ENCODE measurements at regions of chr2 and their contacts with region 1.

Region 1: DNA sequence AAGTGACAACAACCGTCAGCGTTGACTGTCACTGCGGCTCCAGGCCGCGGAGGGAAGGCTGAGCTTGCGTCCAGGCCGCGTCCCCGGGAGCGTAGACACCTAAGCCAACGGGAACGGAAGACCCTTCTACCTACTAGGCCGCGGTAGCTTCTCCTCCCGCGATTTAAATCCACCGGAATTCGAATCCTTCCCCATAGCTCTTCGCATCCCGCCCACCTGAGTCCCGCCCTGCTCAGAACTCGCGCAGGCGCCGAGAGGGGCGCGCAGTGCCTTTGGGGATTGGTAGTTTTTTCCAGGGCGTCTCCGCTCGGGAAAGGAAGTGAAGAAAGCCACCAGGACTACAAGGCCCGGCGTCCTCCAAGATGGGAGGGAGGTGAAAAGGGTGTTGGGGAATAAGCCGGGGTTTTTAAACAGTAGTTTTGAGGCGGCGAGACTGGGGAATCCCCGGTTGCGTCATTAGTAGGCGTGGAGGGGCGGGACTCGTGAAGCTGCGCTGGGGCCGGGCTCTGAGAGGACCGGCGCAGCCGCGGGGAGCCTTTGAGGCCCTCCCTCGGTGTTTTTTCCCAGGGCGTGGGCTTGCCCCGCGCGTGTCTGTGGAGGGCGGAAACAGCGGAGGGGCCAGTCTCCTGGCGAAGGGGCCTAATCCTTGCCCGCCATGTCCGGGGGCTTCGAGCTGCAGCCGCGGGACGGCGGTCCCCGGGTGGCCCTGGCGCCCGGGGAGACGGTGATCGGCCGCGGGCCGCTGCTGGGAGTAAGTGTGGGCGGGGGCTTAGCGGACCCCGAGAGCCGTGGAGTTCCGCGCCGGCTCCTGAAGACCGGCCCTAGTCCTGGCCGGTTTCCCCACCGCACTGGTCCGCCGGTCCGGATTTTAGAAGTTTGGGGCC is at the starts of genes APLF and FBXO48:
- DNase-seq: peak; percentile 98
- H3K4me3 Mint-ChIP-seq: peak within 1 kb of the TSS; percentile 96
- H3K27ac Mint-ChIP-seq: peak within 1 kb of the TSS; percentile 95
- H3K4me1 Mint-ChIP-seq: peaks cover 47% of the 10 kb centered on the region
- H3K27me3 Mint-ChIP-seq: no peaks in the 10 kb centered on the region
- total RNA-seq, gene APLF: 2.8 to 3.6 TPM
- total RNA-seq, gene FBXO48: 5.0 to 5.4 TPM

Region 2: DNA sequence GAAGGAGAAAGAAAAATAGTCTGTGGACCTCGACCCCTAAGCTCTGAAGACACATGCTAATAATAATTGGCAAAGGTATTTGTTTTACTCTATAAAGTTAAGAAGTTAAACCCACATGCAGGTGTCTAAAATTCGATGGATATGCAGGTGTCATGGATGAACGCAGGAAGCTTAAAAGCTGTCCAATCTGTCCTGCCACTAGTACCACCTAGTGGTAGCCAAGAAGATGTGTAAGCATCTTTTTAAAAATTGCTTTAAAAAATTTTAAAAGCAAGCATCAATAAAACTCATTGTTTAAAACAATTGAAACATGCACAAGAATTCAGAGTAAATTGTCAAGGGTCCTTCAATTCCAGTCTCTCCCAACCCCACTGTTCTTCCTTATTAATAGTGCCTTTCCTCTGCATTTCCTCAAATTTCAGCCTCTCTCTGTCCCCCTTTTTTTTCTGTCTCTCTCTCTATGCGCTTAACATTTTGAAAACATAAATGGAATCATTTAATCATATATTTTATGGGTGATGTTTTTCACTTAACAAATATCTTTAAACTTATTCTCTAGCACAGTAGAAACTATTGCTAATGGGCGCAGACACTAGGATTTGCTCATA is 184.4 kb before region 1 on chr2:
- CTCF ChIA-PET with region 1: no interaction called
- POLR2A ChIA-PET with region 1: no interaction called
- DNase-seq: peak; percentile 17
- H3K4me3 Mint-ChIP-seq: no peak overlapping the region
- H3K27ac Mint-ChIP-seq: no peak overlapping the region
- H3K4me1 Mint-ChIP-seq: no peaks in the 10 kb centered on the region
- H3K27me3 Mint-ChIP-seq: peaks cover 21% of the 10 kb centered on the region

Region 3: DNA sequence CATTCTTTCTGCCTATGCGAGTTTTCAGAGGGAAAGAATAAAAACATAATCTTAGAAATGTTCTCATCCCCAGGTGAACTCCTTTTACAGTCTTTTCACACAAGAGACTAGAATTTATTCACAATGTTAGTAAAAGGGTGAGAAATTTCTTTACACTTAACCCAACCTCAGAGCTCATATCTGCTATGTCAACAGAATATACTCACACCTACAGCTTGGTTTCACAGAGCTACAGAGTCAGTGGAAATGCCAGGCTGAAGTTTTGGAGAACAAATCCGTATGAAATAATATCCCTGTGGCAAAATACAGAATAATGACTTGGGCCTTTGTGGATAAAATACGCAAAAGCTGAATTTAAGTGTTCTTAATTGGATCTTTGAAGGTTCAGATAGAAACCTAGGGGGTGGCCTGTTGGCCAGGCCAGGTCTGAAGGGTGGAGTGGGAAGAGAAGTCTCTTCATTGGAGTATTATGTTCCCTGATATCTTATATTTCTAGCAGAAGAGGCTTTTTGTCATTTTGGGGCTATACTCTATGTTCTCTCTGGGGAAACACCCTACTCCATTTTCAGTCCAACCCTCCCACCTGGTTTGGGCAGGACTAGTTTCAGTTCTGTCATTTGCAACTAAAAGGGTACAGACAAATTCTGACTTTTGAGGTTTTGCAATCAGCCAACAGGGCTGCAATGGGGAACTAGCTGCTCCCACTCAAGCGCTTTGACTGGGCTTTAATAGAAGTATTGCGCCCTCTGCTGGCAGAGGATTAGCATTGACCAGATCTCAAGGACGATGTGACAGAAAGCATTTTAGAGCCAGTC is 25.9 kb before region 1 on chr2:
- CTCF ChIA-PET with region 1: interaction called, 13 read pairs
- POLR2A ChIA-PET with region 1: interaction called, 6 read pairs
- DNase-seq: peak; percentile 84
- H3K4me3 Mint-ChIP-seq: no peak overlapping the region
- H3K27ac Mint-ChIP-seq: peak overlapping the region; percentile 7
- H3K4me1 Mint-ChIP-seq: peaks cover 16% of the 10 kb centered on the region
- H3K27me3 Mint-ChIP-seq: peaks cover 10% of the 10 kb centered on the region

Region 4: DNA sequence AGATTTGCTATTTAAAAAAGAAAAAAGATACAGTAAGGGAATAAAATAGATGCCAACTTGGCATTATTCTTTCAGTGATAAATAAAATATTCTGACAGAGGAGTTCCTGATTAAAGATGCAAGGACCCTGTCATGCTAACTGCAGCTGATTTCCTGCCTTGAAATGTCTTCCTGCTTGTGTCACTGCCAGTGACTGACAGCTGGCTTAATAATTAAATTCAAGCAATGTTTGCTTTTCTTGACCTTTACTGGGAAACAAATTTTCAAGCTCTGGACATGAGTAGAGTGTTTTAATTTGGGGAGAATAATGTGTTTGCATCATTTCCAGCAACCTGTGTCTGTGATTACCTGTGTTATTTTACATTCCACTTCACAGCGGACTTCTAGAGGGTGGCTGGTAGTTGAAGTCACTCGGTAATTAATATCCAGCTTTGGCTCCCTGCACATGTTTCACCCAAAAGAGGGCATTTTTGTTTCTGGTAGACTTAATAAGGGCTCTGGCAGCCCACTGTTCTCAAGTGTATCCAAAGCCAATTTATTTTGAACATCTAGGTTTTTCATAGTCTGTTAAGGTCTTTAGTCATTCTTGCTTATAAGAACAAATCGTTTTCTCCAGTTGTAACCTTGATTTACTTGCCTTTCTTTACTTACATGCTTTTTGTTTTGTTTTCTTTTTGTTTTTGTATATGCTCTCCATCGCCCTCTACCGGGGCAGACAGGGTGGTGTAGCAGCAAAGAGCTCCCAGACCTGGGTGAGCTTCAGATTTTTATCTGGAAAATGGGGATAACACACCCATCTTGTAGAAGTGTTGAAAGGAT is 127.6 kb after region 1 on chr2:
- CTCF ChIA-PET with region 1: interaction called, 60 read pairs
- POLR2A ChIA-PET with region 1: interaction called, 8 read pairs
- DNase-seq: peak; percentile 63
- H3K4me3 Mint-ChIP-seq: peak overlapping the region; percentile 34
- H3K27ac Mint-ChIP-seq: no peak overlapping the region
- H3K4me1 Mint-ChIP-seq: peaks cover 11% of the 10 kb centered on the region
- H3K27me3 Mint-ChIP-seq: peaks cover 12% of the 10 kb centered on the region

Region 5: DNA sequence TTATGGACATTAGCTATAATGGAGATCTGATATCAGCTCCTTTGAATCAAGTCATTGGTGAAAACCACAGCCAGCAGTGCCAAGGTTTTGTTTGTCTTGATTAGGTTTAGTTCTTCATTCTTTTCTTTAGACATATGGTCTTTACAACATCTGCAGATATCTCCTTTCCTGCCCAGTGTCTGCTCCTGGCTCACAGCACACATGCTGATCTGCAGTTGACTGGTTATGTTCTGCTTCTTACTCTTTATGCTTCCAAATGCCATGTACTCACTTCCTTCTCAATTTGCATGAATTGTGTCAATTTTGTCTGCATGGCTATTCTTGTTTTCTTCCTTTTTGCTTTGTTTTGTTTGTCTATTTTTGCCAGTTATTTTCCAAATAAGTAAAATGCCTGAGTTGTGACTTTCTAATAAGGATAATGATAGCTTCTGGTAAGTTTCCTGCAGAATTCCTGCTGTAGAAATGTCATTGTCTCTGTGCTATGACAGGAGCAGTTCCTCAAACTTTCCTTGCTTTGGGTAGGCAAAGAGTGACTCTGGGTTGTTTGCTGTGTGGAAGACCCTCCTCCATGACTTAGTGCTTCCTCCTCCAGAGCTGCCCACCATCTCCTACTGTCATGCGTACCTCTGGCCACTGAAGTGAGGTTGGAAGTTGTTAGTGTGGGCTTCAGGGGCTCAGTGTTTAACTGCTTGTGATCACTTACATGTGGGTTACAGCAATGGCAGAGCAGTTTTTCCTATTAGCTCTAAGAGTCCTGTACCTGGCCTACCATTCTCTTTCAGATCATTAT is 275.5 kb after region 1 on chr2:
- CTCF ChIA-PET with region 1: interaction called, 17 read pairs
- POLR2A ChIA-PET with region 1: interaction called, 22 read pairs
- DNase-seq: peak; percentile 18
- H3K4me3 Mint-ChIP-seq: peak overlapping the region; percentile 52
- H3K27ac Mint-ChIP-seq: peak overlapping the region; percentile 68
- H3K4me1 Mint-ChIP-seq: peaks cover 92% of the 10 kb centered on the region
- H3K27me3 Mint-ChIP-seq: no peaks in the 10 kb centered on the region

Region 6: GRCh38 chr2:68909793-68910674 is 442.7 kb after region 1 on chr2:
- CTCF ChIA-PET with region 1: interaction called, 24 read pairs
- POLR2A ChIA-PET with region 1: interaction called, 35 read pairs
- DNase-seq: peak; percentile 80
- H3K4me3 Mint-ChIP-seq: no peak overlapping the region
- H3K27ac Mint-ChIP-seq: peak overlapping the region; percentile 69
- H3K4me1 Mint-ChIP-seq: peaks cover 43% of the 10 kb centered on the region
- H3K27me3 Mint-ChIP-seq: no peaks in the 10 kb centered on the region